Lower leg skin (tissue), 4 donors: ENCODE measurements at regions of chr7 and their contacts with region 1.

Region 1: GRCh38 chr7:131741446-131741845 is 185.0 kb upstream of the PODXL start:
- DNase-seq: no peak
- H3K4me3 ChIP-seq: no peak overlapping the region
- CTCF ChIP-seq: no peak
- POLR2A ChIP-seq: no peak

Region 2: DNA sequence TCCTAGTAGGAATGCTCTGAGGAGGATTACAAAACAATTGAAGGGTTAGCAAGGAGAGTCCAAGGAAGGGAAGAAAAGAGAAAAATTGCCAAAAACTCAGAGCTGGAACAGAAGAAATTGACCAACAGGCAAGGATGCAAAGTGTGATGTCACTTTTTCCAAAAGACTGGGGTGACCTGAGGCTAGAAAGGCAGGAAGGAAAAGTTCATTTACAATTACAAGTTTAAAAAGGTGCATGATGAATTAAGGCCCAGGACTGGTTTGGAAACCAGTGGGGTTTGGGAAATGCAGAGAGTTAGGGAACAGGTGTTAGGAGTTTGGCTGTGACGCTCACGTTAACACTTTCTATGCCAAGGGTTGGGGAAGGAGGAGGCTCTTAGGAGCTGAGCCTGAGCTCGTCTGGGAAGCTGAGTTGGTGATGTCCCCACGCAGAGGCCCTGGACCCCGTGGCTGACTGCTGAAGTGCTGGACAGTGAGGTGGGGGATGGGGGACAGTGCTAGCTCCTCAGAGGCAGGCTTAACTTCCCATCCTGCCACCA is 92.4 kb before region 1 on chr7:
- intact Hi-C with region 1: no loop called
- DNase-seq: no peak
- H3K4me3 ChIP-seq: no peak overlapping the region
- CTCF ChIP-seq: no peak
- POLR2A ChIP-seq: no peak

Region 3: DNA sequence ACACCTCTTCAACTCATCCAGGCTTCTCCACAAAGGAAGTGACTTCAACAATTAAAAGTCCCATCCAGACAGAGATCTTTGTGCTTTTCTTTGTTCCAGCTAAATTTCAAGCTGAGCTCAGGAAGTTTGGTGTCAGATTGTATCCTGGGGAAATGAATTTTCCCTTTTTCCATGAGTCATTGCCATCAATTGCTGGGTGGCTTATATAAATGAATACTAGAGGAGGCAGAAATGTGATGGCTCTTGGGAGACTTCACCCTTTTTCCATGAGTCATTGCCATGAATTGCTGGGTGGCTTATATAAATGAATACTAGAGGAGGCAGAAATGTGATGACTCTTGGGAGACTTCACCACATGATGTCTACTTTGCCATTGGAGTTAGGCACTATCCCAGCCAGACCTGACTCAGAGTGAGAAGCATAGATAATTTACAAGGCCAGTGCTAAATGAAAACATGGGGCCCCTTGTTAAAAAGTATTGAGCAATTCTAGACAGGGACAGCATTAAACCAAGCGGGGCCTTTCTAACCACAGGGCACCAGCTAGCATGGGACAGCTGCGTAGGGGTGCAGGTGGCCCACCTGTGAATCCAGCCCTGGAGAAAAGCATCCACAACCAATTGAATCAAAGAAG is 154.2 kb after region 1 on chr7:
- intact Hi-C with region 1: loop called (anchors 5 kb)
- DNase-seq: no peak
- H3K4me3 ChIP-seq: no peak overlapping the region
- CTCF ChIP-seq: no peak
- POLR2A ChIP-seq: no peak